ENCODE measurements at regions of chr1 and their contacts with region 1.

Region 1: GRCh38 chr1:154324669-154325582 is at the start of gene ATP8B2:
- DNase-seq: peak; percentile 83 to 91 (median 88)
- H3K4me3 ChIP-seq: peak within 1 kb of the TSS; percentile 82 to 98 (median 86)
- H3K27ac ChIP-seq: peak within 1 kb of the TSS; percentile 81 to 91
- H3K4me1 ChIP-seq: peaks cover 19 to 58% (median 54%) of the 10 kb centered on the region in 4 experiments
- H3K27me3 ChIP-seq: no peaks in the 10 kb centered on the region

Region 2: DNA sequence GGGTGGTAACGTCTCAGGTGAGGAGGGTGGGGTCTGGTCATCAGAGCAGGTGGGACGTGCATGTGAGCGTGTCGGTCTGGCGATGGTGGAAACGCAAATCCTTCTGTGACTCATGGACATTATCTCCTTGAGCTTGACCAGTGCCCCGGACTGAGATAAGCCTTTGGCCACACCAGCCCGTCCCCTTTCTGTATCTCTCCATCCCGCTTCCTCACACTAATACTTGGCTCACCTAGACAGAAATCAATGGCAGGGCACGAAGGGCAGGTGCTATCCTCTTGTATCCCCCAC is 11.9 kb before region 1 on chr1:
- CTCF ChIA-PET with region 1: interaction called, 16 read pairs
- POLR2A ChIA-PET with region 1: no interaction called
- DNase-seq: no peak
- H3K4me3 ChIP-seq: no peak overlapping the region
- H3K27ac ChIP-seq: no peak overlapping the region
- H3K4me1 ChIP-seq: no peaks in the 10 kb centered on the region
- H3K27me3 ChIP-seq: no peaks in the 10 kb centered on the region

Measured in common myeloid progenitor, CD34-positive (primary cell).